ENCODE measurements at regions of chr7 and their contacts with region 1.

Region 1: GRCh38 chr7:76515999-76516443 is 5.7 kb downstream of the UPK3B start:
- DNase-seq: peak in 2 of 9 experiments; percentile 40 to 50
- ATAC-seq: peak; percentile 70
- H3K4me3 ChIP-seq: no peak overlapping the region
- H3K4me3 Mint-ChIP-seq: no peak overlapping the region
- H3K27ac ChIP-seq: no peak overlapping the region
- H3K27ac Mint-ChIP-seq: no peak overlapping the region
- H3K4me1 ChIP-seq: no peaks in the 10 kb centered on the region
- H3K4me1 Mint-ChIP-seq: no peaks in the 10 kb centered on the region
- H3K27me3 ChIP-seq: no peaks in the 10 kb centered on the region
- H3K27me3 Mint-ChIP-seq: no peaks in the 10 kb centered on the region
- CTCF ChIP-seq: peak; percentile 58

Region 2: GRCh38 chr7:76409537-76409936 is 106.5 kb before region 1 on chr7 and contains the start of gene SSC4D:
- CTCF ChIA-PET with region 1: no interaction called
- POLR2A ChIA-PET with region 1: no interaction called
- intact Hi-C with region 1: no loop called
- DNase-seq: no peak
- ATAC-seq: no peak
- H3K4me3 ChIP-seq: no peak within 1 kb of the TSS
- H3K4me3 Mint-ChIP-seq: no peak within 1 kb of the TSS
- H3K27ac ChIP-seq: no peak within 1 kb of the TSS
- H3K27ac Mint-ChIP-seq: no peak within 1 kb of the TSS
- H3K4me1 ChIP-seq: no peaks in the 10 kb centered on the region
- H3K4me1 Mint-ChIP-seq: no peaks in the 10 kb centered on the region
- H3K27me3 ChIP-seq: no peaks in the 10 kb centered on the region
- H3K27me3 Mint-ChIP-seq: no peaks in the 10 kb centered on the region
- CTCF ChIP-seq: no peak
- total RNA-seq, gene SSC4D: not detected

Region 3: DNA sequence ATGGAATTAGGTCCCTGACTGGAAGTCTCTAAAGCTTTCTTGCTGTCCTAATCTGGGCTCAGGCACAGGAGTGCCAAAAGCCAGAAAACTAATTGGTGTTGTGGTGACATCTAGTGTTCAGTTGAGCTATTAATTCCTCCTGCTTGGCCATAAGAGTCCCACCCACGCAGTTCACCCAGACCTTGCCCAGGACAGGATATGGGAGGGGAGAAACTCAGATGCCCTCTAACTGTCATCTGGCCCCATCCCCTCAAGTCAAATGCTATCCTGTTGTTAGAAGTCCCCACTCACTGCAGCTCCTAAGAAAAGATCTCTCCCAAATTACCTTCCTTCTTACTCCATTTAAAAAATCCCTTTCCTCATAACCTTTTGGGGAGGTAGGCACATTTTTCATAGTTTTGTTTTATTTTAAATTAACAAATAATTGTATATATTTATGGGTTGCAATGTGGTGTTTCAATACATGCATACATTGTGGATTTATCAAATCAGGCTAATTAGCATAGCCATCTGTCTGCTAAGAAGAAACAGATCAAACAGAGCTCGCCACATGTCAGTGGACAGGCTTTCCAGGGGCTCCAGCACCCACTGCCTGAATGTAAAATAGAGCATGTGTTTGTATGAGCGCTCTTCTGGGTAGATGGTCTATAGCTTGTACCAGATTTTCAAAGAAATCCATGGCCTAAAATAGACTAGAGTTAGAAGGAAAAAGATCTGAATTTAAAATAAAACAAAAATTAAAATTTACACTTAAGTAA is 816.1 kb after region 1 on chr7:
- CTCF ChIA-PET with region 1: no interaction called
- POLR2A ChIA-PET with region 1: no interaction called
- intact Hi-C with region 1: loop called in 1 of 2 experiments (anchors 5 kb)
- DNase-seq: peak in 7 of 9 experiments; percentile 15 to 84 (median 33)
- ATAC-seq: peak; percentile 67
- H3K4me3 ChIP-seq: no peak overlapping the region
- H3K4me3 Mint-ChIP-seq: no peak overlapping the region
- H3K27ac ChIP-seq: peak overlapping the region in 1 of 2 experiments; percentile 10
- H3K27ac Mint-ChIP-seq: no peak overlapping the region
- H3K4me1 ChIP-seq: peaks cover 34% of the 10 kb centered on the region
- H3K4me1 Mint-ChIP-seq: peaks cover 43% of the 10 kb centered on the region
- H3K27me3 ChIP-seq: no peaks in the 10 kb centered on the region
- H3K27me3 Mint-ChIP-seq: no peaks in the 10 kb centered on the region
- CTCF ChIP-seq: peak; percentile 46

Measured in CD8-positive, alpha-beta T cell (primary cell).